ENCODE measurements at regions of chr9 and their contacts with region 1.

Region 1: GRCh38 chr9:77896938-77897667 is 134.5 kb downstream of the GNAQ start:
- DNase-seq: no peak
- H3K4me3 ChIP-seq: no peak overlapping the region
- H3K27ac ChIP-seq: no peak overlapping the region
- H3K4me1 ChIP-seq: peaks cover 0 to 3% (median 2%) of the 10 kb centered on the region in 4 experiments; a peak in 3 of 7 replicates
- H3K27me3 ChIP-seq: no peaks in the 10 kb centered on the region
- CTCF ChIP-seq: peak; percentile 34 to 62 (median 55)
- EP300 ChIP-seq: no peak
- POLR2A ChIP-seq: no peak
- RAD21 ChIP-seq: peak; percentile 44 to 50; a peak in 3 of 4 replicates

Region 2: GRCh38 chr9:77779010-77779409 is 118.1 kb before region 1 on chr9:
- CTCF ChIA-PET with region 1: no interaction called
- POLR2A ChIA-PET with region 1: no interaction called
- DNase-seq: no peak
- H3K4me3 ChIP-seq: no peak overlapping the region
- H3K27ac ChIP-seq: no peak overlapping the region
- H3K4me1 ChIP-seq: no peaks in the 10 kb centered on the region
- H3K27me3 ChIP-seq: no peaks in the 10 kb centered on the region; a peak in 1 of 7 replicates
- CTCF ChIP-seq: no peak
- EP300 ChIP-seq: no peak
- POLR2A ChIP-seq: no peak
- RAD21 ChIP-seq: no peak

Region 3: GRCh38 chr9:77884395-77884851 is 12.7 kb before region 1 on chr9:
- CTCF ChIA-PET with region 1: interaction called, 23 read pairs
- POLR2A ChIA-PET with region 1: interaction called, 3 read pairs
- DNase-seq: peak in 1 of 2 experiments; percentile 29
- H3K4me3 ChIP-seq: no peak overlapping the region
- H3K27ac ChIP-seq: no peak overlapping the region
- H3K4me1 ChIP-seq: peaks cover 3 to 6% (median 5%) of the 10 kb centered on the region in 4 experiments; a peak in 5 of 7 replicates
- H3K27me3 ChIP-seq: no peaks in the 10 kb centered on the region
- CTCF ChIP-seq: no peak
- EP300 ChIP-seq: no peak
- POLR2A ChIP-seq: no peak
- RAD21 ChIP-seq: no peak

Region 4: DNA sequence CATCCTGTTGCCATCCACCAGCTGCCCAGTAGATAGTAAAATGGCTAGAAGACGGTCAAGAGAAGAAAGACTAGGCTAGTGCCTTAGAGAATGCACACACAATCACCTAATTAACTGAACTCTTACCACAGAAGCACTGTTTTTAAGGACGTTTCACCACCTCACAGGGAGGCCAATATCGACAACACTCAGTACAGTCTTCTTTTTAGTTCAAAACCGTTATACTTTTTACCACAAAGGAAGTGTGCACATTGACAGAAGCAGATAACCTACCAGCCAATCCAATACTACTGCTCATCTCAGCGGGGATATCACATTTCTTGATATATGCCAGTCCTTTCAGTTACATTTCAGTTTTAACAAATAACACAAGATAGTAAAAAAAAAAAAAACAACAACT is 12.2 kb after region 1 on chr9:
- CTCF ChIA-PET with region 1: interaction called, 13 read pairs
- POLR2A ChIA-PET with region 1: no interaction called
- DNase-seq: no peak
- H3K4me3 ChIP-seq: no peak overlapping the region
- H3K27ac ChIP-seq: no peak overlapping the region
- H3K4me1 ChIP-seq: peaks cover 0 to 2% (median 1%) of the 10 kb centered on the region in 4 experiments; a peak in 2 of 7 replicates
- H3K27me3 ChIP-seq: no peaks in the 10 kb centered on the region
- CTCF ChIP-seq: no peak
- EP300 ChIP-seq: no peak
- POLR2A ChIP-seq: no peak
- RAD21 ChIP-seq: no peak

Region 5: GRCh38 chr9:77926309-77926959 is 29.3 kb after region 1 on chr9:
- CTCF ChIA-PET with region 1: no interaction called
- POLR2A ChIA-PET with region 1: no interaction called
- DNase-seq: no peak
- H3K4me3 ChIP-seq: no peak overlapping the region
- H3K27ac ChIP-seq: no peak overlapping the region
- H3K4me1 ChIP-seq: peaks cover 0 to 2% (median 0%) of the 10 kb centered on the region in 4 experiments; a peak in 2 of 7 replicates
- H3K27me3 ChIP-seq: no peaks in the 10 kb centered on the region
- CTCF ChIP-seq: no peak
- EP300 ChIP-seq: no peak
- POLR2A ChIP-seq: no peak
- RAD21 ChIP-seq: no peak

Region 6: GRCh38 chr9:78278177-78278777 is 381.2 kb after region 1 on chr9:
- CTCF ChIA-PET with region 1: no interaction called
- POLR2A ChIA-PET with region 1: no interaction called
- DNase-seq: no peak
- H3K4me3 ChIP-seq: no peak overlapping the region
- H3K27ac ChIP-seq: no peak overlapping the region
- H3K4me1 ChIP-seq: no peaks in the 10 kb centered on the region
- H3K27me3 ChIP-seq: no peaks in the 10 kb centered on the region
- CTCF ChIP-seq: no peak
- EP300 ChIP-seq: no peak
- POLR2A ChIP-seq: no peak
- RAD21 ChIP-seq: no peak

Measured in H1 (cell line).